H1 (cell line): ENCODE measurements at regions of chr3 and their contacts with region 1.

Region 1: DNA sequence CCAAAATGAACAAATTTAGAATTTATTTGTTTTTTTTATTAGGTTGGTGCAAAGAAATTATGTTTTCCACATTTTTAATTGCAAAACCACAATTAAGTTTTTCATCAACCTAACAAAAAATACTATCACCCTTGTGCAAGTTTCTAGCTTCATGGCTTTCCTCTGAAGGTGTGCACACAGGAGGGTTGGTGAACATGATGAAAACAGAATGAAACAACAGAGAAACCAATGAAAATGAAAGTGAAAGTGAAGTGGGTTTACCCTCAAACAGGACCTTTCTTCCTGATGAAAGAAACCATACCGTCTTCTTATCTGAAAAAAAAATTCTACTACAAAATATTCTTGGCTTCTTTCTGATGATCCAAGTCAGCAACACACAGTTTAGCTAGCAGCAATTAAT is 71.9 kb upstream of the FEZF2 start:
- DNase-seq: no peak
- H3K4me3 ChIP-seq: peak overlapping the region in 1 of 4 experiments; percentile 21; a peak in 1 of 8 replicates
- H3K27ac ChIP-seq: no peak overlapping the region
- H3K4me1 ChIP-seq: peaks cover 0 to 10% (median 3%) of the 10 kb centered on the region in 4 experiments; a peak in 3 of 7 replicates
- H3K27me3 ChIP-seq: peaks cover 0 to 2% (median 0%) of the 10 kb centered on the region in 4 experiments; a peak in 2 of 7 replicates
- CTCF ChIP-seq: no peak
- EP300 ChIP-seq: no peak
- POLR2A ChIP-seq: no peak
- RAD21 ChIP-seq: no peak

Region 2: DNA sequence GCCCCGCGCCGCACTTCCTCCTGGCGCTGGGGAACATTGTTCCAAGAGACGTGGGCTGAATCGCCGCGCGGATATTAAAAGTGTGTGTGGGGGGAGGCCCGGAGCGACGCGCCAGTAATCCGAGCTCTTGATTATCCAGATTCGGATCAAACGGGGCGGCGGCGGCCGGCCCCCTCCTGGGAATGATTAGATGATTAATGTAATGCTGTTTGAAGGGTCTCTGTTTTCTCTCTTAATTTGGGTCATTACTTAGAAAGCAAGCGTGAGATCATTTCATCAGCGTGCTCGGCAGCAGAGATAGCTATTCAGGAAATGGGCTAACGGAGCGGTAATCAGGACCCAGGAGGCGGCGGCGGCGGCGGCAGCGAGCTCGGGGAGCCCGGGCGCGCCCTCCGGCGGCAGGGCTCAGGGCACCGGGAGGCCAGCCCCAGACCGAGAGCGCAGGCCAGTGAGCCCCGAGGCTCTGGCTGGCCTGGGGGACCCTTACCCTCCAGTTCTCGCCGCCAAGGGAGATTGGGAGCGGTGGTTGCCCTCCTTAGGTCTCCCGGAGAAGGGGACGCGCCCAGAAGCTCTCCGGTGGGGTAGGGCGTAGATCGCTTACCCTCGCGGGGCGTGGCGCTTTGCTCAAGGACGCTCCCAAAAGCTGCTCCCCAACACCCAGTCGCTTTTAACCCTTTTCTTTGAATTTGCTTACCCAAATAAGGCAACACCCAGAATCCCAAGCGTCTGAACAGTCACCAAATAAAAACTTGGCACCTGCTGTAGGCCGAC is 76.4 kb before region 1 on chr3:
- CTCF ChIA-PET with region 1: no interaction called
- POLR2A ChIA-PET with region 1: no interaction called
- DNase-seq: peak in 1 of 2 experiments; percentile 83
- H3K4me3 ChIP-seq: peak overlapping the region; percentile 46 to 60 (median 52)
- H3K27ac ChIP-seq: no peak overlapping the region
- H3K4me1 ChIP-seq: peaks cover 18 to 60% (median 40%) of the 10 kb centered on the region in 4 experiments
- H3K27me3 ChIP-seq: peaks cover 83 to 100% (median 97%) of the 10 kb centered on the region in 4 experiments
- CTCF ChIP-seq: peak in 2 of 3 experiments; percentile 58 to 61; a peak in 3 of 4 replicates
- EP300 ChIP-seq: peak in 1 of 2 experiments; percentile 81; a peak in 1 of 3 replicates
- POLR2A ChIP-seq: no peak
- RAD21 ChIP-seq: peak; percentile 37 to 49; a peak in 3 of 4 replicates

Region 3: GRCh38 chr3:62392626-62393292 is 52.5 kb before region 1 on chr3:
- CTCF ChIA-PET with region 1: no interaction called
- POLR2A ChIA-PET with region 1: no interaction called
- DNase-seq: no peak
- H3K4me3 ChIP-seq: no peak overlapping the region
- H3K27ac ChIP-seq: no peak overlapping the region
- H3K4me1 ChIP-seq: no peaks in the 10 kb centered on the region
- H3K27me3 ChIP-seq: peaks cover 0 to 3% (median 0%) of the 10 kb centered on the region in 4 experiments; a peak in 2 of 7 replicates
- CTCF ChIP-seq: no peak
- EP300 ChIP-seq: no peak
- POLR2A ChIP-seq: no peak
- RAD21 ChIP-seq: no peak

Region 4: DNA sequence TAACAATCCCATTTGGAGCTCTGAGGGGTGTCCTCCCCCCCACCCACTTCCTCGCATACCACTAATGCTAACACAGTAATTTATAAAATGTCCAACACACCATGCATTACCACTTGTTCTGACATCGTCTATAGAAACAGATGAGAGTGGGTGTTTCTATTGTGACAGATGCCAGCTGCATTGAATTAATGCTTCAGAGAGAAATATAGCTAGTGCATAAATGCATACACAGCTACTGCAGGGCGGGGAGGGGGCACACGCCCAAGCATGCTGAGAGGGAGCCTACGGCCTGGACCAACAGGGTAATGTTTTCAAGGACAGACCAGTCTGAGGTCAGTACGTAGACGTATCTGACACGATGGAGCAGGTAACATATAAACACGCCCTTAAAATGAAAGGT is 34.1 kb after region 1 on chr3:
- CTCF ChIA-PET with region 1: no interaction called
- POLR2A ChIA-PET with region 1: no interaction called
- DNase-seq: no peak
- H3K4me3 ChIP-seq: no peak overlapping the region
- H3K27ac ChIP-seq: no peak overlapping the region
- H3K4me1 ChIP-seq: peaks cover 0 to 3% (median 2%) of the 10 kb centered on the region in 4 experiments; a peak in 4 of 7 replicates
- H3K27me3 ChIP-seq: no peaks in the 10 kb centered on the region
- CTCF ChIP-seq: no peak
- EP300 ChIP-seq: no peak
- POLR2A ChIP-seq: no peak
- RAD21 ChIP-seq: no peak

Region 5: GRCh38 chr3:62493109-62493801 is 48.0 kb after region 1 on chr3:
- CTCF ChIA-PET with region 1: interaction called, 11 read pairs
- POLR2A ChIA-PET with region 1: no interaction called
- DNase-seq: no peak
- H3K4me3 ChIP-seq: no peak overlapping the region
- H3K27ac ChIP-seq: no peak overlapping the region
- H3K4me1 ChIP-seq: no peaks in the 10 kb centered on the region
- H3K27me3 ChIP-seq: no peaks in the 10 kb centered on the region
- CTCF ChIP-seq: peak in 2 of 3 experiments; percentile 30 to 62; a peak in 2 of 4 replicates
- EP300 ChIP-seq: no peak
- POLR2A ChIP-seq: no peak
- RAD21 ChIP-seq: peak; percentile 37 to 51

Region 6: GRCh38 chr3:63022114-63022513 is 576.8 kb after region 1 on chr3:
- CTCF ChIA-PET with region 1: no interaction called
- POLR2A ChIA-PET with region 1: no interaction called
- DNase-seq: no peak
- H3K4me3 ChIP-seq: no peak overlapping the region
- H3K27ac ChIP-seq: no peak overlapping the region
- H3K4me1 ChIP-seq: no peaks in the 10 kb centered on the region
- H3K27me3 ChIP-seq: no peaks in the 10 kb centered on the region
- CTCF ChIP-seq: no peak
- EP300 ChIP-seq: no peak
- POLR2A ChIP-seq: no peak
- RAD21 ChIP-seq: no peak